Endothelial cell of umbilical vein (primary cell): ENCODE measurements at regions of chr4 and their contacts with region 1.

Region 1: GRCh38 chr4:140861359-140862176 is 105.4 kb upstream of the TBC1D9 start:
- DNase-seq: peak; percentile 79
- H3K4me3 ChIP-seq: no peak overlapping the region
- H3K27ac ChIP-seq: no peak overlapping the region
- H3K4me1 ChIP-seq: no peaks in the 10 kb centered on the region
- H3K27me3 ChIP-seq: peaks cover 8 to 23% of the 10 kb centered on the region in 2 experiments
- CTCF ChIP-seq: peak; percentile 54 to 65
- POLR2A ChIP-seq: no peak

Region 2: GRCh38 chr4:141074098-141074878 is 212.7 kb after region 1 on chr4:
- CTCF ChIA-PET with region 1: no interaction called
- POLR2A ChIA-PET with region 1: no interaction called
- dilution Hi-C with region 1: no loop called
- intact Hi-C with region 1: no loop called
- DNase-seq: no peak
- H3K4me3 ChIP-seq: no peak overlapping the region
- H3K27ac ChIP-seq: no peak overlapping the region
- H3K4me1 ChIP-seq: no peaks in the 10 kb centered on the region
- H3K27me3 ChIP-seq: no peaks in the 10 kb centered on the region
- CTCF ChIP-seq: no peak
- POLR2A ChIP-seq: no peak

Region 3: DNA sequence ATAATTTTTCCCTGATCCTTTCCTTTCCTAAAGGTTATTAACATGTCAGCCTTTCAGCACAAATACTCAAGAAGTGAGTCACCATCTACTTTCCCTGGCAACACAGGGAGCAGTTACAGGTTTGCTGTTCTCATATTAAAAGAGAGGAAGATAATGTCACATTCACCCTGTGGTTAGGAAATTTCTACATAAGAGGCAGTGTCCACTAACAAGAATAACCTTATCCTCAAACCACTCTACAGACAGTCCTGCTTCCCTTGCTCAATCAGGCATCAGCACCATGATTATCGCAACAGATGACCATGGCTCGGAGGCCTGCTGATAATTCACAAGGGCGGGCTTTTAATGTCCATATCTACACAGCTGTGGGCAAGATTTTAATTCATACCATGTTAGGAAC is 240.8 kb after region 1 on chr4:
- CTCF ChIA-PET with region 1: no interaction called
- POLR2A ChIA-PET with region 1: no interaction called
- dilution Hi-C with region 1: no loop called
- intact Hi-C with region 1: no loop called
- DNase-seq: no peak
- H3K4me3 ChIP-seq: no peak overlapping the region
- H3K27ac ChIP-seq: no peak overlapping the region
- H3K4me1 ChIP-seq: no peaks in the 10 kb centered on the region
- H3K27me3 ChIP-seq: no peaks in the 10 kb centered on the region
- CTCF ChIP-seq: no peak
- POLR2A ChIP-seq: no peak

Region 4: GRCh38 chr4:141133146-141133998 is 271.8 kb after region 1 on chr4 and contains the start of gene RNF150:
- CTCF ChIA-PET with region 1: interaction called, 35 read pairs
- POLR2A ChIA-PET with region 1: no interaction called
- dilution Hi-C with region 1: no loop called
- intact Hi-C with region 1: loop called (anchors 1 kb)
- DNase-seq: peak; percentile 79
- H3K4me3 ChIP-seq: peak within 1 kb of the TSS; percentile 51 to 79 (median 56)
- H3K27ac ChIP-seq: no peak within 1 kb of the TSS
- H3K4me1 ChIP-seq: peaks cover 3% of the 10 kb centered on the region
- H3K27me3 ChIP-seq: peaks cover 29 to 62% of the 10 kb centered on the region in 2 experiments
- CTCF ChIP-seq: peak; percentile 54 to 64
- POLR2A ChIP-seq: no peak
- total RNA-seq, gene RNF150: 0.30 and 0.33 TPM in 2 replicates